Naive thymus-derived CD4-positive, alpha-beta T cell (primary cell): ENCODE measurements at regions of chrX and their contacts with region 1.

Region 1: DNA sequence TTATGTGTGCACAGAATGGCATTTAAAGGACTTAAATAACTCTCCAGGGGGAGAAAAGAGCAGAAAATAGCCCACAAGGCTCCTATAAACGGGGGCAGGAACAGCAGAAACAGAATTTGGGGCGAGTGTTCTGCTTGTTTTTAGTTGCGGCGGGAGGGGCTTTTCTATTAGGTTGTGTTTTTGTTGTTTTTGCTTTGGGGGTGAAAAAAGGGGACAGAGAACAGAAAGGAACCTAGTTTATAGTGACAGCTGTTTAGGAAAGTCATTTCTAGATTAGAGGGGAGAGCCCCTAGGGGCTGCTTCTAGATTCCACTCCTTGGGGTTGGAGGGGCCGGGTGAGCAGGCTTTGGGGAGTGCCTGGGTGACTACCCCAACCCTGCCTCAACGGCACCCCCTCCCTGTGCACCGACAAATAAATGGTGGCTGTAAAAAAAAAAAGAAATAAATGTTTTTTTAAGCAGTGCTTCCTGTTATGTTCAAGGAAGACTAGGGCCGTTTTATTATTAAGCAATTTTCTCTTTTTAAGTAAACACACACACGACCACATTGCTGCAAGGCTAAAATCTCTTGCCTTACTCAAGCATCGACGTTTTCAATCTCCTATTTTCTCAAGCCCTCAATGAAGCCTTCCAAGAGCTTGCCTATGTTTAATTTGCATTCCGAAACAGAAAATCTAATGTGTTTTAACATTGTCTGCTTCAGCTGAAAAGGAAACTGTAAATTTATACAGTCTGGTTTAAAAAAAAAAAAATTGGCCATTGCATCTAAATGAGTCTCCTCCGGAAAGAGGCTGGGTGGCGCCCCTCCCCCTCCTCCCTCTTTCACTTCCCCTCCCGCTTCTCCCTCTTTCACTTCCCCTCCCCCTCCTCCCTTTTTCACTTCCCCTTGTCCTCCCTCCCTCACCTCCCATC is 123.3 kb upstream of the TBL1X start:
- DNase-seq: peak in 8 of 9 donors; percentile 46 to 74 (median 64)
- ATAC-seq: peak; percentile 70
- H3K4me3 ChIP-seq: peak overlapping the region; percentile 62
- H3K4me3 Mint-ChIP-seq: peak overlapping the region; percentile 70 to 88 (median 86)
- H3K27ac ChIP-seq: peak overlapping the region; percentile 74
- H3K27ac Mint-ChIP-seq: peak overlapping the region; percentile 94 to 98 (median 96)
- H3K4me1 ChIP-seq: peaks cover 9 to 27% of the 10 kb centered on the region in 2 donors
- H3K4me1 Mint-ChIP-seq: peaks cover 11 to 57% (median 35%) of the 10 kb centered on the region in 7 donors
- H3K27me3 ChIP-seq: no peaks in the 10 kb centered on the region
- H3K27me3 Mint-ChIP-seq: no peaks in the 10 kb centered on the region

Region 2: GRCh38 chrX:8988446-8988845 is 353.1 kb before region 1 on chrX:
- CTCF ChIA-PET with region 1: no interaction called
- POLR2A ChIA-PET with region 1: no interaction called
- intact Hi-C with region 1: loop called in 1 of 2 experiments (anchors 5 kb)
- DNase-seq: peak in 6 of 9 donors; percentile 11 to 25 (median 18)
- ATAC-seq: no peak
- H3K4me3 ChIP-seq: no peak overlapping the region
- H3K4me3 Mint-ChIP-seq: peak overlapping the region in 3 of 10 donors; percentile 52 to 78 (median 66)
- H3K27ac ChIP-seq: peak overlapping the region; percentile 10
- H3K27ac Mint-ChIP-seq: peak overlapping the region in 8 of 9 donors; percentile 84 to 99 (median 94)
- H3K4me1 ChIP-seq: peaks cover 3 to 21% of the 10 kb centered on the region in 2 donors
- H3K4me1 Mint-ChIP-seq: peaks cover 8 to 34% (median 27%) of the 10 kb centered on the region in 7 donors
- H3K27me3 ChIP-seq: no peaks in the 10 kb centered on the region
- H3K27me3 Mint-ChIP-seq: no peaks in the 10 kb centered on the region

Region 3: DNA sequence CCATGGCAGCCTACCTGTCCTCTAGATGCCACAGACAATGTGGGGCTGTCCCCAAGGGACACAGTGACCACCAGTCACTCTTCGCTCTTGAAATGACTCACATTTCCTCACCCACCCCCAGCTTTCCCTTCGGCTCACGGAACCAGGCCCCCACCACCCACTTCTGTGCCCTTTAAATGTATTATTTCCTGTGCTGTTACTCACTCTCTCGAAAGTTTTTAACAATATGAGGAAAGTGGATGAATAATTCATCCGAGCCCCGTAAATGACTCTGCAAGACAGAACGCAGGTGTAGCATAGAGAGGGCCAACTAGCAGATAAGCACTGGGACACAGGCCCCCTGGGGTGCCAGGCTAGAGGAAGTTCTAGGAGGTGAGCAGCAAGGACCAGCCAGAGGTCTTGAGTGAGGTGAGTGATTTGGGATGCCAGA is 56.2 kb before region 1 on chrX:
- CTCF ChIA-PET with region 1: no interaction called
- POLR2A ChIA-PET with region 1: no interaction called
- intact Hi-C with region 1: loop called in 1 of 2 experiments (anchors 2 kb)
- DNase-seq: peak in 1 of 9 donors; percentile 59
- ATAC-seq: no peak
- H3K4me3 ChIP-seq: no peak overlapping the region
- H3K4me3 Mint-ChIP-seq: peak overlapping the region in 5 of 10 donors; percentile 19 to 49 (median 39)
- H3K27ac ChIP-seq: no peak overlapping the region
- H3K27ac Mint-ChIP-seq: peak overlapping the region in 6 of 9 donors; percentile 11 to 84 (median 76)
- H3K4me1 ChIP-seq: peaks cover 0 to 7% of the 10 kb centered on the region in 2 donors
- H3K4me1 Mint-ChIP-seq: peaks cover 6 to 34% (median 14%) of the 10 kb centered on the region in 7 donors
- H3K27me3 ChIP-seq: no peaks in the 10 kb centered on the region
- H3K27me3 Mint-ChIP-seq: no peaks in the 10 kb centered on the region

Region 4: DNA sequence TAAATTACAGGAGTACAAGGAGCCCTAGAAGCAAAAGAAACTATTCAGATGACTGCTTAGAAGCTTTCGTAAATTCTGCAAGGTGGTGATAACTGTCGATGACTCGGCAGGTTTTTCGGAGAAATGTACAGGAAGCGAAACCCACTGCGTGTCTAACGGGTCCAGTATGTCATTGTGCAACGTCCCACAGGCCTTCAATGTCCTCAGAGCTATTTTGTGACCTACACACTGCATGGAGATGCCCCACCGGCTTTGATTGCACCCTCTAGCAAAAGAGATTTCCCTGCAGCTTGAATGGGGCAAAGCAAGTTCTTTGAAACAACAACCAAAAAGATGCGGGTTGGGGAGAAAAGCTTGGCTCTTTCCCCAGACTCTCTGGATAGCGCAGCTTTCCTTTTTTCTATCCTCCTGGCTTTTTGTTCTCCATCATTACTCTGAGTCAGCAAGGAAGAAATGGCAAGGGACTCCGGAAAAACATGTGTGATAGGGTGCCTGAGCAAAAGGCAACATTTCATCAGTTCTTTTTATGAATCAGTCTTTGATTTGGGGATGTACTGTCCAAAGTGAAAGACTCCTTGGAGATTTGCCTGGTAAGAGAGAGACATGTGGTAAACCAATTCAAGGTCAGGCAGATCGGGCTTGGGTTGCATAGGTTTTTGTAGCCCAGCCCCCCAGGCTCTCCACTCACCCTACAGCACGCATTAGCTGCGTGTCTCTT is 11.3 kb after region 1 on chrX:
- CTCF ChIA-PET with region 1: no interaction called
- POLR2A ChIA-PET with region 1: interaction called, 4 read pairs
- intact Hi-C with region 1: loop called (anchors 1 to 2 kb)
- DNase-seq: peak in 4 of 9 donors; percentile 12 to 27 (median 22)
- ATAC-seq: peak; percentile 63
- H3K4me3 ChIP-seq: peak overlapping the region; percentile 8
- H3K4me3 Mint-ChIP-seq: peak overlapping the region; percentile 60 to 82 (median 74)
- H3K27ac ChIP-seq: no peak overlapping the region
- H3K27ac Mint-ChIP-seq: peak overlapping the region in 8 of 9 donors; percentile 74 to 95 (median 82)
- H3K4me1 ChIP-seq: peaks cover 10 to 36% of the 10 kb centered on the region in 2 donors
- H3K4me1 Mint-ChIP-seq: peaks cover 16 to 45% (median 31%) of the 10 kb centered on the region in 7 donors
- H3K27me3 ChIP-seq: no peaks in the 10 kb centered on the region
- H3K27me3 Mint-ChIP-seq: peaks cover 0 to 4% (median 0%) of the 10 kb centered on the region in 5 donors

Region 5: DNA sequence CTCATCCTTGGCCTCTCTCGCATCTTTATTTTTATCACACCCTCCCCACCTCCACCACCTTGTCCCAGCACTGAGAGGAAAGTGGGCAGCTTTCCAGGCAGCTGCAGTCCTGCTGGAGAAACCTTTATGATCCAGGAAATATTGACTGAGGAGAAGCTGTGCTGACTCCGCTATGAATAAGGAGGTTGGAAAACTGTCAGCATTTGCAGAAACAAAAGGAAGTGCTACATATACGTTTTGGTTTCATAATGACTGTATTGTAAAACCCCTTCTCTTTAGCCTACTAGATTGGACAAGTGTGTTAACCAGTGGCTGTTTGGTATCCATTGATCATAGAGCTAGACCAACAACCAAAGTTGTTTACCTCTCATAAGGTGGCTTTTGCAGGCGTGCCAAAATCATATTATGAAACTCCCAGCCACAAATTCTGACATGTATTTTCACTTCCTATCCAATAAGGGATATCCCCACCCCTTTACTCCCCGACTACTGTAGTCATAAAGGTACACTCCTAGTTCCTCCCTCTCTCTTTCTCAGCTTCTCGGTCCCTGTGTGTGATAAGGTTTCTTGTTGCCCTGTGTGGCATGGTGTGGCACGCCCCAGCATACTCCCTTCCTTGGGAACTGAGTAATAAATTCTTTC is 335.7 kb after region 1 on chrX:
- CTCF ChIA-PET with region 1: no interaction called
- POLR2A ChIA-PET with region 1: no interaction called
- intact Hi-C with region 1: loop called in 1 of 2 experiments (anchors 5 kb)
- DNase-seq: peak in 3 of 9 donors; percentile 7 to 23 (median 16)
- ATAC-seq: peak; percentile 88
- H3K4me3 ChIP-seq: no peak overlapping the region
- H3K4me3 Mint-ChIP-seq: peak overlapping the region in 2 of 10 donors; percentile 15 to 63
- H3K27ac ChIP-seq: no peak overlapping the region
- H3K27ac Mint-ChIP-seq: peak overlapping the region in 5 of 9 donors; percentile 25 to 91 (median 64)
- H3K4me1 ChIP-seq: no peaks in the 10 kb centered on the region
- H3K4me1 Mint-ChIP-seq: peaks cover 7 to 40% (median 22%) of the 10 kb centered on the region in 7 donors
- H3K27me3 ChIP-seq: no peaks in the 10 kb centered on the region
- H3K27me3 Mint-ChIP-seq: no peaks in the 10 kb centered on the region

Region 6: GRCh38 chrX:11111038-11111851 is 1769.7 kb after region 1 on chrX and contains the start of gene HCCS:
- CTCF ChIA-PET with region 1: no interaction called
- POLR2A ChIA-PET with region 1: no interaction called
- intact Hi-C with region 1: loop called in 1 of 2 experiments (anchors 5 kb)
- DNase-seq: peak; percentile 59 to 86 (median 81)
- ATAC-seq: peak; percentile 94
- H3K4me3 ChIP-seq: peak within 1 kb of the TSS; percentile 73
- H3K4me3 Mint-ChIP-seq: peak within 1 kb of the TSS in 4 of 10 donors; percentile 95 to 98 (median 96)
- H3K27ac ChIP-seq: peak within 1 kb of the TSS; percentile 87
- H3K27ac Mint-ChIP-seq: peak within 1 kb of the TSS in 7 of 9 donors; percentile 90 to 99 (median 96)
- H3K4me1 ChIP-seq: no peaks in the 10 kb centered on the region
- H3K4me1 Mint-ChIP-seq: peaks cover 7 to 33% (median 24%) of the 10 kb centered on the region in 7 donors
- H3K27me3 ChIP-seq: no peaks in the 10 kb centered on the region
- H3K27me3 Mint-ChIP-seq: no peaks in the 10 kb centered on the region
- total RNA-seq, gene HCCS: 5.6 to 19.9 (median 13.3) TPM